ENCODE measurements at regions of chr3 and their contacts with region 1.

Region 1: DNA sequence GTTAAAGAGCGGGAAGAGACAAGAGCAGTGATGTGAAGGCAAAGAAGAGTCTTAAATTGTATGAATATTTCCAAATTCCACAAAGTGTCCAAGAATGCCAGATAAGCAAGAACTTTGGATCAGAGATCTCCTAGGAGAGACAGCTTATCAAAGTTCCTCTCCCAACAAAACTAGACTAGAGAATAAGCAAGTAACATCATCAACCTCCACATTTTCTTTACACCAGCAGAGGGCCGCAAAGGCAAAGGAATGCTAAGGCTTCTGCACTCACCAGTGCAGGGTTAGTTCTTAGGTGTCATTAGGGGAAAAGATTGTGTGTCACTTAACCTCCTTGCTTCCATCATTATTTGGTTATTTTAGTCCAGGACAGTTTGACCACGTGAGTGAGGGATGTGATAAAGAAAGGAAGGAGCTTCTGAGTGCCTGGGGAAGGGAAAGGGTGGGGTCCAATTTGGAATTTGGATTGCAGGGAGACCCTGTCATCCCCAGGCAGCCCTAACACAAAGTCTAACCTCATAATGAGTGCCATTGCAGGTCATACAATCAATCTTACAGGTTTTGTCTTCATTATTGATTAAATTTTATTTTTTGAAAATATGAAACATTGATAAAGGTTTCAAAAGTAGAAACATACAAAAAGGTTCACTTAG is 7.5 kb upstream of the CMTM6 start:
- DNase-seq: peak; percentile 3
- H3K4me3 ChIP-seq: no peak overlapping the region
- H3K27ac ChIP-seq: no peak overlapping the region
- H3K4me1 ChIP-seq: no peaks in the 10 kb centered on the region
- H3K27me3 ChIP-seq: no peaks in the 10 kb centered on the region
- CTCF ChIP-seq: peak; percentile 45 to 87 (median 76)
- POLR2A ChIP-seq: no peak

Region 2: DNA sequence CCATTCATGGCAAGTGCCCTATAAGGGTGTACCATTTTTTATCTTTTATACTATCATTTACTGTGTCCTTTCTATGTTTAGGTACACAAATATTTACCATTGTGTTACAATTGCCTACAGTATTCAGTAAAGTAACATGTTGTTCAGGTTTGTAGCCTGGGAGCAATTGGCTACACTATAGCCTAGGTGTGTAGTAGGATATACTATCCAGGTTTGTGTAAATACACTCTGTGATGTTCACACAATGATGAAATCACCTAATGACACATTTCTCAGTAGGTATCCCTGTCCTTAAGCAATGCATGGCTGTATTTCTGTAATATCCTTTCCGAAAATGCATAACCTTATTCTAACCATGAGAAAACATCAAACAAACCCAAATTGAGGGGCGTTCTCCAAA is 156.9 kb after region 1 on chr3:
- intact Hi-C with region 1: loop called (anchors 5 kb)
- DNase-seq: no peak
- H3K4me3 ChIP-seq: no peak overlapping the region
- H3K27ac ChIP-seq: no peak overlapping the region
- H3K4me1 ChIP-seq: no peaks in the 10 kb centered on the region
- H3K27me3 ChIP-seq: peaks cover 0 to 27% (median 0%) of the 10 kb centered on the region in 4 donors
- CTCF ChIP-seq: no peak
- POLR2A ChIP-seq: no peak

Region 3: DNA sequence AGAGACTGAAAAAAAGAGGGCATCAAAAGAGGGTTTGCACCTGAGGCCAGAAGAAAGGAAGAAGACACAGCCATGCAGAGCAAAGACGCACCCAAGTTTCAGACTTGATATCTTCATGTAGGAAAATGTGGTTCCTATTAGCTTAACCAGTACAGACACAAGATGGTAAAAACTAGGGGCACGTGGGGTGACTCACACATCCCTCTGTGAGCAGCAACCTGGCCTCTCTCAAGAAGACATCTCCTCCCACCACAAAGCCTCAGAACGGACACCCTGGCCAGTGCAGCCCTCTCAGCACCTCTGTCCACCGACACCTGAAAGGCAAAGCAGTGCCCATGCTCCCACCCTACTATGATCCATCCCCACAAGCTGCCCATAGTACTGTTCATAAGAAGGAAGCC is 553.5 kb after region 1 on chr3:
- intact Hi-C with region 1: no loop called
- DNase-seq: no peak
- H3K4me3 ChIP-seq: no peak overlapping the region
- H3K27ac ChIP-seq: no peak overlapping the region
- H3K4me1 ChIP-seq: peaks cover 0 to 9% (median 0%) of the 10 kb centered on the region in 3 donors
- H3K27me3 ChIP-seq: no peaks in the 10 kb centered on the region
- CTCF ChIP-seq: no peak
- POLR2A ChIP-seq: no peak